CD4-positive, alpha-beta T cell (primary cell): ENCODE measurements at regions of chr7 and their contacts with region 1.

Region 1: DNA sequence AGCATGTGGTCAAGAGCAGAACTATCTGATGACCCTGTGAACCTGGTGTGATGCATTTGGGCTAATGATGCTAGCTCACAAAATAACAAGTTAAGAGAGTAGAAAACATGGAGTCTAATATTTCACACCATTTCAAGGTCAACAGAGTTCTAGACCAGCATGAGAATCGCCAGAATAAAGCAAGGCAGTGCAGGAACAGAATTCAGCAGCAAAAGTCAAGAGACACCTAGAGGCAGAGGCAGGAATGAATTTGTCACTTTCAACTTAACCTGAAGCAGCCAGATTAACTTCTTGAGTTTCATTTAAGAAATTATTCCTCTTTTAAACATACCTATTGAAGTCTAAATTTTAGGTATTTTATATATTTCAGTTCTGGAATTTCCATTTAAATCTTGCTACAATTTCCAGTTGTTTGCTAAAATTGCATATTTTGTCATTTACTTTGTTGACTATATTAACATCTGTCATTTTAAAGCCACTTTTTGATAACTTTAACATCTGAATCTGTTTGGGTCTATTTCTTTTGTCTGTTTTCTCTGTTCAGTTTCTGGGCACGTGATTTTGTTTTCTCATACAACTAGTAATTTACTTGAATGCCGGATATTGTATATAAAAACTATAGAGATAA is 44.2 kb upstream of the PRSS58 start:
- DNase-seq: peak in 3 of 14 experiments; percentile 29 to 38 (median 33)
- ATAC-seq: no peak
- H3K4me3 ChIP-seq: no peak overlapping the region
- H3K4me3 Mint-ChIP-seq: no peak overlapping the region
- H3K27ac ChIP-seq: no peak overlapping the region
- H3K27ac Mint-ChIP-seq: no peak overlapping the region
- H3K4me1 ChIP-seq: peaks cover 12% of the 10 kb centered on the region
- H3K4me1 Mint-ChIP-seq: peaks cover 40% of the 10 kb centered on the region
- H3K27me3 ChIP-seq: no peaks in the 10 kb centered on the region
- H3K27me3 Mint-ChIP-seq: peaks cover 24% of the 10 kb centered on the region
- CTCF ChIP-seq: peak; percentile 16

Region 2: DNA sequence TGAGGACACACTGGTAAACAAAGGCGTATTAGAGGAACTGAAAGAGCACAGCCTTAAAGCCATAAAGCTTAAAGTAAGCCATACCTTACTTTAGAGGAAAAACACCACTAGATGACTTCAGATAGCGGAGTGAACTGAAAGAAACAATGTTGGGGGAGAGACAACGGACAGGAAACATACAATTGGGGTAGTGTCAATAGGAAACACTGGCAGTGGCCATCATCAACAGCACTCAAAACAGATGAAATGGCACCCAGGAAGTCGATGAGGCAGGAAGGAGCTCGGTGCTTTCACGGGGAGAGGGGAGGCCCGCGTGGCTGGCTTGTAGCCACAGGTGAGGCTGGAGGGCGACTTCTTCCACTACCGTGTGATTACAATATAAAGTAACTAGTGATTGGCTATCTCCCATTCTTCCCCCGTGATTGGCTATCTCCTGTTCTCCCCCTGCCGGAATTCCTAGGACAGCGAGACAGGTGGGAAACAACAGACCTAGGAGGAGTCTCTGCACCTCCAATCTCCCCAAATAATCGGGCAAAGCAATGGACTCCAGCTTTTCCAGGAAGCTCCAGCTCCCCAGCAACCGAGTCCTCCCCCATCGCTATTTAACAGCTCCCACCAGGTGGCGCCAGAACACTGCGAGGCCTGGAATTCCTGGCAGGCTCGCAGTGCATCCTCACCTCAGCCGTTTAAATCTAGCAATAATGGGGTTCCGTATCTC is 326.1 kb before region 1 on chr7:
- CTCF ChIA-PET with region 1: no interaction called
- POLR2A ChIA-PET with region 1: no interaction called
- intact Hi-C with region 1: loop called (anchors 5 kb)
- DNase-seq: peak; percentile 26 to 76 (median 54)
- ATAC-seq: peak; percentile 78
- H3K4me3 ChIP-seq: peak overlapping the region; percentile 52
- H3K4me3 Mint-ChIP-seq: peak overlapping the region; percentile 68
- H3K27ac ChIP-seq: no peak overlapping the region
- H3K27ac Mint-ChIP-seq: peak overlapping the region; percentile 20
- H3K4me1 ChIP-seq: peaks cover 11% of the 10 kb centered on the region
- H3K4me1 Mint-ChIP-seq: peaks cover 21% of the 10 kb centered on the region
- H3K27me3 ChIP-seq: no peaks in the 10 kb centered on the region
- H3K27me3 Mint-ChIP-seq: no peaks in the 10 kb centered on the region
- CTCF ChIP-seq: peak; percentile 78

Region 3: DNA sequence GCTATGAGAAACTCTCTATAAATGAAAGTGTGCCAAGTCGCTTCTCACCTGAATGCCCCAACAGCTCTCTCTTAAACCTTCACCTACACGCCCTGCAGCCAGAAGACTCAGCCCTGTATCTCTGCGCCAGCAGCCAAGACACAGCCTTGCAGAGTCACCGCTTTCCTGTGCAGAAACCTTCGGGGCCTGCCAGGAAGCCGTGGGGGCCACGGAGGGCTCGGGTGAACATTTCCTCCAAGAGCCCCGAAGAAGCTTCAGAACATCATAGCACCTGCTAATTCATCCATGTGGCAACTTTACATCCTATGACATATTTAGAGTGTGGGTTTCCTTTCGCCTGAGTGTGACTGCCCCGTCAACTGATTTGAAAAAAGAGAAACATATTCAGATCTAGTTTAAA is 11.5 kb after region 1 on chr7:
- CTCF ChIA-PET with region 1: interaction called, 5 read pairs
- POLR2A ChIA-PET with region 1: interaction called, 16 read pairs
- intact Hi-C with region 1: no loop called
- DNase-seq: peak in 9 of 14 experiments; percentile 35 to 64 (median 52)
- ATAC-seq: peak; percentile 91
- H3K4me3 ChIP-seq: peak overlapping the region; percentile 2
- H3K4me3 Mint-ChIP-seq: peak overlapping the region; percentile 65
- H3K27ac ChIP-seq: no peak overlapping the region
- H3K27ac Mint-ChIP-seq: peak overlapping the region; percentile 58
- H3K4me1 ChIP-seq: peaks cover 15% of the 10 kb centered on the region
- H3K4me1 Mint-ChIP-seq: peaks cover 18% of the 10 kb centered on the region
- H3K27me3 ChIP-seq: peaks cover 0 to 7% of the 10 kb centered on the region in 2 experiments
- H3K27me3 Mint-ChIP-seq: peaks cover 4% of the 10 kb centered on the region
- CTCF ChIP-seq: no peak

Region 4: DNA sequence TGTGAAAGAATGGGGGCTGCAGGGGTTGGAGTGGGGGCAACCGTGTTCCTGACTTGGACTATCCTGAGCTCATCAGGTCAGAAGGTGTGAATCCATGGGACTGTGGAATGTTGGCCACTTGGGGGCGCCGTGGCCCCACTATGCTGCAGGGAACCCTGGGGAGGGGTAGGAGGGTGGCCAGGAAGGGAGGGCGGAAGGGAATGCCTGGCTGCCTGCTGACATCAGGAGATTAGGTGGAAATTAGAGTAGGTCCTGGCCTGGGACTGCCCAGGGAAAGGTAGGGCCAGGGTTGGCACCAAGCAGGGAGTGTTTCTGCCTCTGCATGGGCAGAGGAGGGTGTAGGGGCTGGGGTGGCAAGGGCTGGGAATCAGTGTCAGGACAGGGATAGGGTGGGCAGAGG is 21.7 kb after region 1 on chr7:
- CTCF ChIA-PET with region 1: interaction called, 6 read pairs
- POLR2A ChIA-PET with region 1: interaction called, 14 read pairs
- intact Hi-C with region 1: no loop called
- DNase-seq: peak in 8 of 14 experiments; percentile 34 to 72 (median 54)
- ATAC-seq: peak; percentile 38
- H3K4me3 ChIP-seq: no peak overlapping the region
- H3K4me3 Mint-ChIP-seq: no peak overlapping the region
- H3K27ac ChIP-seq: peak overlapping the region in 1 of 2 donors; percentile 17
- H3K27ac Mint-ChIP-seq: peak overlapping the region; percentile 83
- H3K4me1 ChIP-seq: peaks cover 24% of the 10 kb centered on the region
- H3K4me1 Mint-ChIP-seq: peaks cover 38% of the 10 kb centered on the region
- H3K27me3 ChIP-seq: no peaks in the 10 kb centered on the region
- H3K27me3 Mint-ChIP-seq: peaks cover 16% of the 10 kb centered on the region
- CTCF ChIP-seq: peak; percentile 45

Region 5: GRCh38 chr7:143069912-143070500 is 768.0 kb after region 1 on chr7:
- CTCF ChIA-PET with region 1: no interaction called
- POLR2A ChIA-PET with region 1: no interaction called
- intact Hi-C with region 1: no loop called
- DNase-seq: no peak
- ATAC-seq: no peak
- H3K4me3 ChIP-seq: no peak overlapping the region
- H3K4me3 Mint-ChIP-seq: no peak overlapping the region
- H3K27ac ChIP-seq: no peak overlapping the region
- H3K27ac Mint-ChIP-seq: no peak overlapping the region
- H3K4me1 ChIP-seq: no peaks in the 10 kb centered on the region
- H3K4me1 Mint-ChIP-seq: no peaks in the 10 kb centered on the region
- H3K27me3 ChIP-seq: no peaks in the 10 kb centered on the region
- H3K27me3 Mint-ChIP-seq: peaks cover 26% of the 10 kb centered on the region
- CTCF ChIP-seq: no peak